ENCODE measurements at regions of chr14 and their contacts with region 1.

Region 1: DNA sequence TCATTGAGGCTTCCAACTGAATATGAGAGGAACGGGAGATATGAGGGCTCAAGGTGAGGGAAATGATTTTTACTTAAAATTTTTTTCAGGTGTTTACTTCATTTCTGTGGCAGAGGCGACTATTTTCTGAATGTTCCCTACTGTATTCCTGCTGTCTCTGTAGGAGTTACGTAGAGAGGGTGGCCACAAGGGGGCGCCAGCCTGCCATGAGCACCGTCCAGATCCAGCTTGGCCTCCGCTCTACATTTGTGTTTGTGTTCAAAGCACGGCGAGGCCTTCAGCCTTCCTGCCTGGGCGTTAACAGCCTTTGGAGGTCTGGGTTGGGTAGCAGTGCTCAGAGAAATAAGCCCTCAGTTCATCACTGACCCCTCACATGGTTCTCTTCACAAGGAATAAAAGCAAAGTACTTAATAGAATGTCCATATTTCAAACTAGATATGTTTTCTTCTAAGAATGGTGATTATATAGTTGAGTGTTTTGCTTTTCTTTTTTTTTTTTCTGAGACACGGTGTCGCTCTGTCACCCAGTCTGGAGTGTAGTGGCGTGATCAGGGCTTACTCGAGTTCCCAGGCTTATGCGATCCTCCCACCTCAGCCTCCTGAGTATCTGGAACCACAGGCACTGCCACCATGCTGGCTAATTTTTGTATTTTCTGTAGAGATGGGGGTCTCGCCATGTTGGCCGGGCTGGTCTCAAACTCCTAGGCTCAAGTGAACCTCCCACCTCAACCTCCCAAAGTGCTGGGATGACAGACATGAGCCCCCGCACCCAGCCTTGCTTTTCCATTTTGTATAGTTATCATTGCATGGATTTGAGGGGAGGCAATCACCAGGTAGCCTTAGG is 22.3 kb downstream of the CKB start:
- DNase-seq: peak; percentile 83 to 89 (median 84)
- H3K4me3 ChIP-seq: no peak overlapping the region
- H3K27ac ChIP-seq: no peak overlapping the region
- H3K4me1 ChIP-seq: peaks cover 0 to 18% (median 3%) of the 10 kb centered on the region in 4 experiments
- H3K27me3 ChIP-seq: no peaks in the 10 kb centered on the region

Region 2: DNA sequence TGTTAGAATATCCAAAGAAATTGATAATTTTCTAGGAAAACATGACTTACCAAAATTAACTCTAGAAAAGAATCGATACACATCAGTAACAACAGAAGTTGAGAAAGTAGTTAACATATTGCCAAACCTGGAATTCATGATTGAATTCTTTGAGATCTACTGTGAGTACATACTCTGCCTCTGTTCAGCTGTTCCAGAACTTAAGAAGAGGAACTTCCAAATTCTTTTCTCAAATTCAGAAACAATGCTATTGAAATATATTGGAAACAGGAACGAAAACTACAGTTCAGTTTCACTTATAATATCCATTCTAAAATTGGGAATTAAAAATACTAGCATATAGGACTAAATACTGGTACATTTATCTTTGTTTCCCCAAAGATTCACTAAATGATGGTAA is 57.3 kb before region 1 on chr14:
- CTCF ChIA-PET with region 1: no interaction called
- POLR2A ChIA-PET with region 1: no interaction called
- DNase-seq: no peak
- H3K4me3 ChIP-seq: no peak overlapping the region
- H3K27ac ChIP-seq: no peak overlapping the region
- H3K4me1 ChIP-seq: peaks cover 0 to 4% (median 0%) of the 10 kb centered on the region in 4 experiments
- H3K27me3 ChIP-seq: no peaks in the 10 kb centered on the region

Region 3: DNA sequence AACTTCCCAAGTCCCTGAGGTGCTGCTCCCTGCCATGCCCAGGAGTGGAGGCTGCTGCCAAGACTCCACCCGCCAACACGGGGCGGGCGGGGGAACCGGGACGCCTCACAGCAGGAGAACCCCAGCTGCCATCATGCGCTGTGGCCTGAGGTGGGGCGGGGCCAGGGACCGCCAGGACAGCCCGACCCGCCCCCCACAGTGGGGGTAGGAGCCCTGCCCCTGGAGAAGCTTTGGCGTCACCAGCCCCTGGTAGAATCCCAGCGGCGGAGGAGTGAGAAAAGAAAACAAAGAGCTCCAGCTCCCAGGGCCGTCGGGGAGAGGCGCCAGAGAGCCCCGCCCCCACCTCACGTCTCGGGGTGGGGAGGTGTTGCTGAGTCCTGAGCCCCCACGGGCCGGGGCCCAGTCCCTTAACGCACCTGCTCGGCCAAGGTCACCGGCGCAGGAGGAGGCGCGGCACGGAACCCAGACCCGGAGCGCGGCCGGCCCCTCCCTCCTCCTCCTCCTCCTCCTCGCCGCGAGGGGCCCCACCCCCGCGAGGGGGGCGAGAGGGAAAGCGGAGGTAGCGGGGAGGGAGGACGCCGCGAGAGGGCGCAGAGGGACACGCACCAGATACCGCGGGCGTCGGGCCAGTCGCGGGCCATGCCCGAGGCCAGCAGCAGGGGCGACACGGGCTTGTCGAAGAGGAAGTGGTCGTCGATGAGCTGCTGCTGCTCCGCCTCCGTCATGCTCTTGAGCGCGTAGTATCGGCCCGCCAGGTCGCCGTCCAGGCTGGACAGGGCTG is 20.5 kb after region 1 on chr14:
- CTCF ChIA-PET with region 1: interaction called, 47 read pairs
- POLR2A ChIA-PET with region 1: no interaction called
- DNase-seq: peak; percentile 91 to 94 (median 92)
- H3K4me3 ChIP-seq: peak overlapping the region; percentile 38 to 74 (median 64)
- H3K27ac ChIP-seq: no peak overlapping the region
- H3K4me1 ChIP-seq: peaks cover 0 to 57% (median 52%) of the 10 kb centered on the region in 4 experiments
- H3K27me3 ChIP-seq: peaks cover 0 to 30% (median 6%) of the 10 kb centered on the region in 5 experiments

Measured in common myeloid progenitor, CD34-positive (primary cell).